Upper lobe of right lung (tissue), 1 donor: ENCODE measurements at regions of chr6 and their contacts with region 1.

Region 1: DNA sequence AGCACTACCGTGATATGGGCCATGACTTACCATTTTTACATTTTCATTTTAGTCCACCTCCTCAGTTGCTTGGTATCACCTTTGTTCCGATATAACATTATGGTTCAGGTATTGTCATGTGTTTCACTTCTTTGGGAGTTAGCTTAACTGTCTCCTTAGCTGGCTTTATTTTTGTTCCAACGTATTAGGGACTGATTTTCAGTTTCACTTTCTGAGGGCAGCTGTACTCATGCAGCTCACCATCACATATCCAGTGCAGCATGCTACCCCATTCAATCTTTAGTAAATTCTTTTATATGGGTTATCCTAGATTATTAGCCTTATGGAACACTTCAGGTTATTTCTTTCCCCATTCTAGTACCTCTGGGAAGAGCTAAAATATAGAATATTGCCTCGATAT is 362.2 kb upstream of the IRAK1BP1 start:
- DNase-seq: no peak
- ATAC-seq: no peak
- H3K4me3 ChIP-seq: no peak overlapping the region
- H3K27ac ChIP-seq: no peak overlapping the region
- H3K4me1 ChIP-seq: no peaks in the 10 kb centered on the region
- H3K27me3 ChIP-seq: no peaks in the 10 kb centered on the region
- CTCF ChIP-seq: no peak

Region 2: GRCh38 chr6:77487808-77488425 is 1017.3 kb before region 1 on chr6:
- intact Hi-C with region 1: no loop called
- DNase-seq: no peak
- ATAC-seq: no peak
- H3K4me3 ChIP-seq: no peak overlapping the region
- H3K27ac ChIP-seq: no peak overlapping the region
- H3K4me1 ChIP-seq: no peaks in the 10 kb centered on the region
- H3K27me3 ChIP-seq: no peaks in the 10 kb centered on the region
- CTCF ChIP-seq: no peak

Region 3: GRCh38 chr6:78132671-78133410 is 372.3 kb before region 1 on chr6:
- intact Hi-C with region 1: loop called (anchors 10 kb)
- DNase-seq: no peak
- ATAC-seq: no peak
- H3K4me3 ChIP-seq: no peak overlapping the region
- H3K27ac ChIP-seq: no peak overlapping the region
- H3K4me1 ChIP-seq: no peaks in the 10 kb centered on the region
- H3K27me3 ChIP-seq: no peaks in the 10 kb centered on the region
- CTCF ChIP-seq: no peak